ENCODE measurements at regions of chrX and their contacts with region 1.

Region 1: DNA sequence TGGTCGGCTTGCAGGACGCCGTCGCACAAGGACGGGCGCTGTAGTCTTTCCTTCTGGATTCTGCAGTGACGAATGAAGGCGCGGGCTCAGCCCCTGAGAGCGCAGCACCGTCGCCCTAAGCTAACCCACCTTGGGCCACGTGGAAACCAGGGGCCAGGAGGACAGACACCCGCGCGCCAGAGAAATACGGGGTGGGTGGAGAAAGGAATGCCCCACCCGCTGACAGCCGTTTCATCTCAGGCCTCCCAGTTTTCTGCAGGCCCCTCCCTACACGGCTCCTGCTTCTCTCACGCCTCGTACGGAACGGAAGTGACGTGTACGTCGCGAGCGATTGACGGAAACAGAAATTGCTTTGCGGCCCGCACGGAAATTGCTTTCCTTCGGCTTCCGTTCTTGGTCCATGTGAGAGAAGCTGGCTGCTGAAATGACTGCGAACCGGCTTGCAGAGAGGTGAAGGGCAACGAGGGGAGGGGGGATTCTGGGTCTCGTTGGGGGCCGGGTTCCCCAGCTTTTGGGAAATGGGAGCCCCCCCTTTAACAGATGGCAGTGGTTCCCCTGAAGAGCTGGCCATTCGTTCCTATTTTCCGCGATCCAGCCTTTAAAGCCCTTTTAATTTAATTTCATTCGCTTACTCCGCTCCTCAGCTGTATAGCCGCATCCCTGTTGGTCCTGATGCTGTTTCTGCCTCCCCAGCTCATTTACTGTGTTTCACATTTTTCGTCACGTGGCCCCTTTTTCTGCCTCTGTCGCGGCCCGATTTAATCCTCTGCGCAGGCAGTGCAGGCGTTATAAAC is at the start of gene UTP14A:
- DNase-seq: peak; percentile 79 to 88
- ATAC-seq: peak; percentile 96 to 99 (median 99)
- H3K4me3 ChIP-seq: peak within 1 kb of the TSS; percentile 50 to 80 (median 70)
- H3K27ac ChIP-seq: peak within 1 kb of the TSS; percentile 35 to 87 (median 81)
- H3K4me1 ChIP-seq: peaks cover 0 to 12% (median 6%) of the 10 kb centered on the region in 9 donors
- H3K27me3 ChIP-seq: no peaks in the 10 kb centered on the region
- CTCF ChIP-seq: no peak
- total RNA-seq, gene UTP14A: 7.4 to 12.6 (median 9.6) TPM

Region 2: GRCh38 chrX:129823115-129823514 is 82.9 kb before region 1 on chrX:
- intact Hi-C with region 1: no loop called
- DNase-seq: peak in 1 of 2 donors; percentile 20
- ATAC-seq: no peak
- H3K4me3 ChIP-seq: no peak overlapping the region
- H3K27ac ChIP-seq: peak overlapping the region in 1 of 10 donors; percentile 23
- H3K4me1 ChIP-seq: no peaks in the 10 kb centered on the region
- H3K27me3 ChIP-seq: no peaks in the 10 kb centered on the region
- CTCF ChIP-seq: peak in 7 of 9 donors; percentile 48 to 67 (median 55)

Region 3: DNA sequence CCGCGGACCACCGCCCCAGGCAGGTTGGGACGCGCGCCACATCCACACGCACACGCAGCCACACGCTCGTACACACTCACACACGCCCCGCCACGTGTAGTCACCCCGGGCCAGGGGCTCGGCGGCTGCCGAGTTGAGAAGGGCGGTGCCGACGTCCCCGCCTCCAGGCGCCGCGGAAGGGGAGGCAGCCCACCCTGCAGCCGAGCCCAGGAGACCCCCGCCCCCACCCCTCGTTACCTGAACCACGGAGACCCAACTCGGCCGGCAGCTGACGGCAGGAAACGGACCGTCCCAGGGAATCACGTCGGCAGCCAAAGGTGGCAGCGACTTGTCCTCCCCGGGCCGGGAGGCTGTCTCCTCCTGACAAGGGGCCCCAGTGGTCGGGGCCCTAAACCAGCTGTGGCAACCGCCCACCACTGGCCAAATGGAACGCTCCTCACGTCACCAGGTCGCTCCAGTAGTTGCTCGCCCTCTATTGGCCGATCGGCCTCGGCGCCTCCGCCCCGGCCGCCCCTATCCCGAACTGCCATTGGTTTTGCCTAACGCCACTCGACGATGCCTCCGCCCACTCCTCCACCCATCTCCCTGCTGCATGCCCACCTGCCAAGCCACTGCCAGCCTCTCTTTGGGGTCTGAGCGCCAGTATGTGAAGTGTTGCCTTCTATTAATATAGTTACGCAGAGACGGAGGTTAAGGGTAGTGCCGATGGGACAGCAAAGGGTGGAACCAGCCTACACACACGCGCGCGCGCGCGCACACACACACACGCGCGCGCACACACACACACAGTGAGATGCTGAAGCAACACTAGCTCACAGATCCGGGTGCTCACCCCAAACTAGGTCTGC is 62.3 kb before region 1 on chrX and contains the start of gene ZDHHC9:
- intact Hi-C with region 1: loop called in 1 of 10 experiments (anchors 10 kb)
- DNase-seq: peak; percentile 88 to 90
- ATAC-seq: peak; percentile 94 to 99 (median 97)
- H3K4me3 ChIP-seq: peak within 1 kb of the TSS; percentile 49 to 84 (median 70)
- H3K27ac ChIP-seq: peak within 1 kb of the TSS; percentile 13 to 83 (median 76)
- H3K4me1 ChIP-seq: peaks cover 0 to 12% (median 0%) of the 10 kb centered on the region in 9 donors
- H3K27me3 ChIP-seq: peaks cover 0 to 14% (median 0%) of the 10 kb centered on the region in 7 donors
- CTCF ChIP-seq: peak in 4 of 9 donors; percentile 2 to 25 (median 14)
- total RNA-seq, gene ZDHHC9: 8.3 to 22.8 (median 11.4) TPM

Region 4: DNA sequence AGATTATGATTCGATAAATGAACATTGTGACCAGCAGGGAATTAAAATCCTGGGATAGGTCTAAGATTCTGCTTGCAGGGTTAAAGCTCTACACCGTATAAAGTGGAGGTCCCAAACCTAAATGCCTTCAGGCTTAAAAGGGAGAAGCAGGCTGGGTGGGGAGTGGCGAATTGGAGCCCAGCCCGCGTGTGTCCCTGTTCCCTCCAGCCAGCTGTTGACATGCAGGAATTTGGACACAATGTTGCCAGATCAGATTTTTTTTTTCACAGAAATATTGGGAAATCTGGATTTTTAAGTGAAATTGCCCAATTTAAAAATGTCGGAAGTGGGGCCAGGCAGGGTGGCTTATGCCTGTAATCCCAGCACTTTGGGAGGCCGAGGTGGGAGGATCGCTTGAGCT is 143.8 kb after region 1 on chrX:
- intact Hi-C with region 1: no loop called
- DNase-seq: no peak
- ATAC-seq: peak in 1 of 8 donors; percentile 66
- H3K4me3 ChIP-seq: no peak overlapping the region
- H3K27ac ChIP-seq: no peak overlapping the region
- H3K4me1 ChIP-seq: no peaks in the 10 kb centered on the region
- H3K27me3 ChIP-seq: no peaks in the 10 kb centered on the region
- CTCF ChIP-seq: no peak